Activated T-helper 2 cell treated with anti-CD3 and anti-CD28 coated beads, Interferon-gamma antibody, Interleukin-2, Interleukin-4, amounts not matched to agents 10 μg/mL and 5 μg/mL and 100 μg/mL, durations not matched to agents 14 hours and 24 hours and 36 hours (primary cell): ENCODE measurements at regions of chr17 and their contacts with region 1.

Region 1: DNA sequence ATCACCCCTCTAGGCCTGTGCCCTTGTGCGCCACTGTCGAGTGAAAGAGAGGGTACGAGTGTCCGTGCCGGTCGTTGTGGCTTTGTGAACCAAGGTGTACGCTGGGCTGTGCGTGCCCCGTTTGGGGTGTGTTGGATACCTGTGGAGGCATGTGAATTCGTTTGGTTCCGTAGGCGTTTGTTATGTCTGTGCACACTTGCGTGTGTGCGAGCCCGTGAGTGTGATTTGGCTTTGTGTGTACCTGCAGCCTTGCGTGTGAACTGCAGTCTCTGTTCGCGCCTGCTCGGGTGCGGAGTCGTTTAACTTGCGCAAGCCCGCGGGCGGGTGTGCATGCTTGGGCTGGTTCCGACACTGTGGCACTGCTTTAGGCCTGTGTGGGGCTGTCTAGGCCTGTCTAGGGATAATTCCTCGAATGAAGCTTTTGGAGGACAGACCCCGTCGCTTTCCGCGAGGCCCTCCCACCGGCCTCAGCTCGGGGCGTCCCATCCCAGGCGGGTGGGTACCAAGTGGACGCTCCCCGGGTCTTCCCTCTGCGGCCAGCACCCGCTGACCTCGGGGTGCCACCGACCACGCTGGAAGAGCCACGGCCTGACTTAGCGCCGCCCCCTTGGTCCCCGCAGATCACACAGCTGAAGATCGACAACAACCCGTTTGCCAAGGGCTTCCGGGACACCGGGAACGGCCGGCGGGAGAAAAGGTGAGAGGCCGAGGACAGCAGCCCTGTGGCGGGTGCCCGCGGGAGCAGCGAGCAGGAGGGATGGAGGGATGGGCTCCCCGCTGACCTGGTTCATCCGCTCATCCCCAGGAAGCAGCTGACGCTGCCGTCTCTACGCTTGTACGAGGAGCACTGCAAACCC is 4.4 kb downstream of the TBX2 start:
- DNase-seq: no peak
- H3K4me3 Mint-ChIP-seq: no peak overlapping the region
- H3K27ac Mint-ChIP-seq: no peak overlapping the region
- H3K4me1 Mint-ChIP-seq: peaks cover 16% of the 10 kb centered on the region
- H3K27me3 Mint-ChIP-seq: peaks cover 71% of the 10 kb centered on the region

Region 2: DNA sequence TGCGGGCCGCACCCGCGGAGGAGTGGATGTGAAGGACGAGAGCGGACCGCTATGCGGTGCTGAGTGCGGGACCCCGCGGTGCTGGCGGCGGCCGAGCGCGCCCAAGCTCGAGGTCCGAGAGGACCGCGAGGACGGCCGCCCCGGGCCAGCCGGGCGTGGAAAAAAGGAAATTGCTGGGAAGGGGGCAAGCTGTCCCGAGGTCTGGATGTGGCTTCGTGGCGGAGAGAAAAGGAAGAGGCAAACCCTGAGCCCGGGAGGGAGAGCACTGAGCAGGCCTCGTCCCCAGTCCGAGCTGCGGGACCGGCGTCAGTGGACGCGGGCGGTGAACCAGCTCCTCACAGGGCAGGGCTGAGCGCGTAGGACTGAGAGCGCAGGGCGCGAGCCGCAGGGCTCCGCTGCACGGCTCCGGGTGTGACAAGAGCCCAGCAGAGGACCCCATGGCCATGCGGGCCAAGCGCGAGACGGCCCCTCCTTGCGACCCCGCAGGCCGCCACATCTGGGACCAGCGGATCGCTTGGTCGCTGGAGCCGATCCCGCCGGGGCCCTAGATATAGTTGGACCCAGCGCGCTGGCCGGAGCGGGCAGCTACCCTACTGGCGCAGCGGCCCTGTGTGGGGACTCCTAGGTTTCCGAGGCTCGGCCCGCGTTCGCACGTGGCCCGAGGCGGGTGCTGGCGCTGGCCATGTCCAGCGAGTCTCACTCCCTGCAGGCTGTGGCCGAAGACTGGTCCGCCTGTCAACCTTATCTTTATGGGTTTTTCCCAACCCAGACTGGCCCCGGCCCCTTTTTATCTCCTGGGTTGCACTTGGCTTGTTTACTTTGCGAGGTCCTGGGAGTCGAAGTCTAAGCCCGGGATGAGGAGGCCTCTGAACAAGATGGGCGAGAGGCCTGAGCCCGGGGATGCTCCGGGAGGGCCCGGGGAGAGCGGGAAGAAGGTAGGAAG is 50.6 kb after region 1 on chr17:
- intact Hi-C with region 1: loop called (anchors 1 kb)
- DNase-seq: no peak
- H3K4me3 Mint-ChIP-seq: no peak overlapping the region
- H3K27ac Mint-ChIP-seq: no peak overlapping the region
- H3K4me1 Mint-ChIP-seq: peaks cover 6% of the 10 kb centered on the region
- H3K27me3 Mint-ChIP-seq: peaks cover 77% of the 10 kb centered on the region